Caco-2 (cell line): ENCODE measurements at regions of chr11 and their contacts with region 1.

Region 1: DNA sequence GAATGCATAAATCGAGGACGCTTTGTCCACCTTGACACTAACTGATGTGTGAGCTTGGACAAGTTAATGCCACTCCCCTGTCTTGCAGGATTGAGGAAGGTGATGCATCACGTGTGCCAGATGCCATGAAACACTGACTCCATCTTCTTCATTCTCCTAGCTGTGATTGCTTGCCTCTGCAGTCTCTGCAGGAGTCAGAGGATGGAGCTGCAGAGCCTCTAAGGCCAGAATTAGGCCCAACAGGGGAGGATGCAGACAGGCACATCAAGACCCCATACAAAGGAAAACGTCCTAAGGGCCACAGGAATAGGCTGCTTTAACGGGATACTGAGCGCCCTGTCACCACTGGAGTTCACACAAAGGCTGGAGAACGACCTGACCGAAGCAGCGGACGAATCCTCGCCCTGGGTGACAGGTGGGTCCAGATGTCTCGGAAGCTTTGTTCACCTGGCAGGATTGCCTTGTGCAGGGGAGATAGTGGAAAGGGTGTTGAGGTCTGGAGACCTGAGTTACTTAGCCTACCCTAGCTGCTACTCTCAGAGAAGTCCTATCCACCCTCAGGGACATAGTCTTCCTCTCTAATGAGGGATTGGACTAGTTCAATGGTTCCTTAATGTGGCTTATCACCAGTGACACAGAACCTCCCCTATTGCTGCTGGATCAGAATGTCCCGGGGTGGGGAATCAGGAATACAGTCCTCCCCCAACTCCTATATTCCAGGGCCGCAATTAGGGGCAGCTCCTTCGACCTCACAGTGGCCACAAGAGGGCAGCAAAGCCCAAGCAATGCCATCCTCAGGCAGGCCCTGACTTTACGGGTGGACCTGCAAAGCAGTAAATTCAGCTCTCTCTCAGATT is 32.4 kb downstream of the DBX1 start:
- DNase-seq: peak; percentile 82 to 87
- H3K4me3 ChIP-seq: no peak overlapping the region
- H3K4me3 Mint-ChIP-seq: no peak overlapping the region
- H3K27ac Mint-ChIP-seq: no peak overlapping the region
- H3K4me1 ChIP-seq: no peaks in the 10 kb centered on the region
- H3K4me1 Mint-ChIP-seq: peaks cover 8% of the 10 kb centered on the region
- H3K27me3 ChIP-seq: no peaks in the 10 kb centered on the region
- H3K27me3 Mint-ChIP-seq: peaks cover 2% of the 10 kb centered on the region
- CTCF ChIP-seq: peak; percentile 82 to 89

Region 2: GRCh38 chr11:19800162-19800561 is 327.7 kb before region 1 on chr11:
- CTCF ChIA-PET with region 1: no interaction called
- POLR2A ChIA-PET with region 1: no interaction called
- intact Hi-C with region 1: loop called (anchors 5 kb)
- DNase-seq: no peak
- H3K4me3 ChIP-seq: no peak overlapping the region
- H3K4me3 Mint-ChIP-seq: no peak overlapping the region
- H3K27ac Mint-ChIP-seq: peak overlapping the region; percentile 23
- H3K4me1 ChIP-seq: peaks cover 49% of the 10 kb centered on the region
- H3K4me1 Mint-ChIP-seq: peaks cover 44% of the 10 kb centered on the region
- H3K27me3 ChIP-seq: no peaks in the 10 kb centered on the region
- H3K27me3 Mint-ChIP-seq: no peaks in the 10 kb centered on the region
- CTCF ChIP-seq: peak in 1 of 2 experiments; percentile 47

Region 3: GRCh38 chr11:20089796-20090653 is 37.9 kb before region 1 on chr11:
- CTCF ChIA-PET with region 1: no interaction called
- POLR2A ChIA-PET with region 1: no interaction called
- intact Hi-C with region 1: no loop called
- DNase-seq: peak in 1 of 2 experiments; percentile 35
- H3K4me3 ChIP-seq: no peak overlapping the region
- H3K4me3 Mint-ChIP-seq: no peak overlapping the region
- H3K27ac Mint-ChIP-seq: no peak overlapping the region
- H3K4me1 ChIP-seq: peaks cover 16% of the 10 kb centered on the region; the same call in 1 of the 2 replicates
- H3K4me1 Mint-ChIP-seq: peaks cover 24% of the 10 kb centered on the region
- H3K27me3 ChIP-seq: no peaks in the 10 kb centered on the region
- H3K27me3 Mint-ChIP-seq: no peaks in the 10 kb centered on the region
- CTCF ChIP-seq: no peak

Region 4: DNA sequence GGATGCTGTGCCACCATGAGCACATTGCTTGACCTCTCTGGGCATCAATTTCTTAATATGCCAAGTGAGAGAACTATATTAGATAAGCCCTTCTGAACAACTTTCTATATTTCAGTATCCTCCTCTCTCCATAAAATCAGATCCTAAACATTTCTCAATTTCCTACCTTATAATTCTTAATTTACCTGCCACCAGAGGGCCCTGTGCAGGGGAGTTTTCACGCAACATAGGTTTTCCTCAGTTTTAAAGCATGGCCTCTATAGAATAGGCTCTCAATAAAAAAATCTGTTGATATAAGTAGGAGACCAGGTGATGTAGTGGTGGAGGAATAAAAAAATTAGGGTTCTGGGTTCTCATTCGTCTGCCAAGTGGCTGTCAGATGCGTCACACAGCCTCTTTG is 116.1 kb after region 1 on chr11:
- CTCF ChIA-PET with region 1: no interaction called
- POLR2A ChIA-PET with region 1: no interaction called
- intact Hi-C with region 1: loop called (anchors 10 kb)
- DNase-seq: no peak
- H3K4me3 ChIP-seq: no peak overlapping the region
- H3K4me3 Mint-ChIP-seq: no peak overlapping the region
- H3K27ac Mint-ChIP-seq: no peak overlapping the region
- H3K4me1 ChIP-seq: no peaks in the 10 kb centered on the region
- H3K4me1 Mint-ChIP-seq: no peaks in the 10 kb centered on the region
- H3K27me3 ChIP-seq: no peaks in the 10 kb centered on the region
- H3K27me3 Mint-ChIP-seq: peaks cover 20% of the 10 kb centered on the region
- CTCF ChIP-seq: peak; percentile 39 to 59

Region 5: GRCh38 chr11:20355221-20356219 is 227.6 kb after region 1 on chr11:
- CTCF ChIA-PET with region 1: interaction called, 45 read pairs
- POLR2A ChIA-PET with region 1: no interaction called
- intact Hi-C with region 1: loop called (anchors 1 kb)
- DNase-seq: peak; percentile 70 to 75
- H3K4me3 ChIP-seq: 0 out of 2 replicates have a peak overlapping the region, but pooled peaks have one; percentile 2
- H3K4me3 Mint-ChIP-seq: peak overlapping the region; percentile 71
- H3K27ac Mint-ChIP-seq: peak overlapping the region; percentile 81
- H3K4me1 ChIP-seq: peaks cover 13% of the 10 kb centered on the region
- H3K4me1 Mint-ChIP-seq: peaks cover 30% of the 10 kb centered on the region
- H3K27me3 ChIP-seq: no peaks in the 10 kb centered on the region
- H3K27me3 Mint-ChIP-seq: no peaks in the 10 kb centered on the region
- CTCF ChIP-seq: peak; percentile 69 to 74

Region 6: GRCh38 chr11:20609727-20610707 is 482.1 kb after region 1 on chr11:
- CTCF ChIA-PET with region 1: interaction called, 6 read pairs
- POLR2A ChIA-PET with region 1: no interaction called
- intact Hi-C with region 1: loop called (anchors 1 kb)
- DNase-seq: peak; percentile 80 to 91
- H3K4me3 ChIP-seq: no peak overlapping the region
- H3K4me3 Mint-ChIP-seq: peak overlapping the region; percentile 57
- H3K27ac Mint-ChIP-seq: no peak overlapping the region
- H3K4me1 ChIP-seq: 0 out of 2 replicates have a peak, but pooled peaks cover 3% of the 10 kb centered on the region
- H3K4me1 Mint-ChIP-seq: peaks cover 9% of the 10 kb centered on the region
- H3K27me3 ChIP-seq: no peaks in the 10 kb centered on the region
- H3K27me3 Mint-ChIP-seq: peaks cover 23% of the 10 kb centered on the region
- CTCF ChIP-seq: peak; percentile 92 to 97